Natural killer cell (primary cell): ENCODE measurements at regions of chr5 and their contacts with region 1.

Region 1: DNA sequence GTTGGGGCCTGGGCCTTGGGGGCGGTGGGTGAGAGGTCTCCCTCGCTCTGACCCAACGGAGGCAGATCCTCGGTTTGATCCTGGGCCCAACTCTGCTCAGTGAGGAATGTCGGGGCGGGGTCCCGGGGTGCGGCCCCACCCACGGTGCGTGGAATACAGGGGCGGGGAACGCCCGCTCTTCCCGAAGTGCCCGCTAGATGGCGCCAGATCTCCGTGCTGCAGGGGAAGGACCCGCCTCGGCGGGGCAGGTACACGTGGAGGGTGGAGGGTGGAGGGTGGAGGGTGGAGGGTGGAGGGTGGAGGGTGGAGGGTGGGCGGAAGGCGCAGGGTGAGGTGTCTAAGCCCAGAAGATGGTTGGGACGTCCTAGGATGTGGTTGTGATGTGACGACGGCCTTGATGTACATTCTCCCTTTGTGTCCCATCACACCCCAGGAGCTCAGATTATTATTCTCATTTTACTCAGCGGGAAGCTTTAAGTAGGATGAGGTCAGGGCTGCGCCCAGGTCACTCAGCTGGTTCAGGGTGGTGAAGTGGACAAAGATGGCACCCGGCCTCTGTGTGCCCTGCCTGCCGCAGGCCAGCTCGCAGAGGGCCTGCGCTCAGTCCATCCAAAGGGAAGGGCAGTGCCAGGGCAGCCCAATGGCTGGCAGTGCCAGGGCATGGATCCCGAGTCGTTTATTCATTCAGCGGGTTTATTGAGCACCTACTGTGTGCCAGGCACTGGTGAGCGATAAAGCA is 9.4 kb upstream of the RPS14 start:
- DNase-seq: peak; percentile 83 to 90
- ATAC-seq: peak; percentile 95 to 99 (median 99)
- H3K4me3 ChIP-seq: no peak overlapping the region
- H3K4me3 Mint-ChIP-seq: no peak overlapping the region
- H3K27ac ChIP-seq: no peak overlapping the region
- H3K27ac Mint-ChIP-seq: peak overlapping the region in 1 of 2 donors; percentile 70
- H3K4me1 ChIP-seq: peaks cover 26% of the 10 kb centered on the region
- H3K4me1 Mint-ChIP-seq: peaks cover 4 to 17% of the 10 kb centered on the region in 2 donors
- H3K27me3 ChIP-seq: no peaks in the 10 kb centered on the region
- H3K27me3 Mint-ChIP-seq: no peaks in the 10 kb centered on the region
- CTCF ChIP-seq: peak; percentile 77

Region 2: GRCh38 chr5:150523472-150524350 is 64.7 kb after region 1 on chr5:
- intact Hi-C with region 1: loop called (anchors 1 kb)
- DNase-seq: peak in 1 of 2 donors; percentile 60
- ATAC-seq: no peak
- H3K4me3 ChIP-seq: no peak overlapping the region
- H3K4me3 Mint-ChIP-seq: no peak overlapping the region
- H3K27ac ChIP-seq: no peak overlapping the region
- H3K27ac Mint-ChIP-seq: no peak overlapping the region
- H3K4me1 ChIP-seq: peaks cover 9% of the 10 kb centered on the region
- H3K4me1 Mint-ChIP-seq: peaks cover 12 to 13% of the 10 kb centered on the region in 2 donors
- H3K27me3 ChIP-seq: no peaks in the 10 kb centered on the region
- H3K27me3 Mint-ChIP-seq: no peaks in the 10 kb centered on the region
- CTCF ChIP-seq: no peak

Region 3: GRCh38 chr5:150672237-150672883 is 213.4 kb after region 1 on chr5:
- intact Hi-C with region 1: no loop called
- DNase-seq: peak in 1 of 2 donors; percentile 43
- ATAC-seq: peak; percentile 53 to 70 (median 55)
- H3K4me3 ChIP-seq: peak overlapping the region; percentile 30
- H3K4me3 Mint-ChIP-seq: peak overlapping the region; percentile 78
- H3K27ac ChIP-seq: no peak overlapping the region
- H3K27ac Mint-ChIP-seq: peak overlapping the region in 1 of 2 donors; percentile 52
- H3K4me1 ChIP-seq: peaks cover 18% of the 10 kb centered on the region
- H3K4me1 Mint-ChIP-seq: no peaks in the 10 kb centered on the region
- H3K27me3 ChIP-seq: peaks cover 12% of the 10 kb centered on the region
- H3K27me3 Mint-ChIP-seq: peaks cover 8 to 16% of the 10 kb centered on the region in 2 donors
- CTCF ChIP-seq: no peak

Region 4: GRCh38 chr5:152051499-152052454 is 1592.8 kb after region 1 on chr5:
- intact Hi-C with region 1: no loop called
- DNase-seq: no peak
- ATAC-seq: no peak
- H3K4me3 ChIP-seq: no peak overlapping the region
- H3K4me3 Mint-ChIP-seq: no peak overlapping the region
- H3K27ac ChIP-seq: no peak overlapping the region
- H3K27ac Mint-ChIP-seq: no peak overlapping the region
- H3K4me1 ChIP-seq: no peaks in the 10 kb centered on the region
- H3K4me1 Mint-ChIP-seq: no peaks in the 10 kb centered on the region
- H3K27me3 ChIP-seq: no peaks in the 10 kb centered on the region
- H3K27me3 Mint-ChIP-seq: peaks cover 0 to 7% of the 10 kb centered on the region in 2 donors
- CTCF ChIP-seq: no peak